Endothelial cell of umbilical vein (primary cell): ENCODE measurements at regions of chr17 and their contacts with region 1.

Region 1: GRCh38 chr17:64420143-64420971 is 28.6 kb upstream of the MILR1 start:
- DNase-seq: peak; percentile 76
- H3K4me3 ChIP-seq: no peak overlapping the region
- H3K27ac ChIP-seq: no peak overlapping the region
- H3K4me1 ChIP-seq: peaks cover 6% of the 10 kb centered on the region
- H3K27me3 ChIP-seq: no peaks in the 10 kb centered on the region
- CTCF ChIP-seq: peak; percentile 74 to 75
- POLR2A ChIP-seq: no peak

Region 2: GRCh38 chr17:64145757-64146417 is 274.5 kb before region 1 on chr17:
- CTCF ChIA-PET with region 1: interaction called, 3 read pairs
- POLR2A ChIA-PET with region 1: interaction called, 3 read pairs
- dilution Hi-C with region 1: no loop called
- intact Hi-C with region 1: loop called (anchors 5 kb)
- DNase-seq: peak; percentile 99
- H3K4me3 ChIP-seq: peak overlapping the region; percentile 31 to 72 (median 64)
- H3K27ac ChIP-seq: peak overlapping the region; percentile 63
- H3K4me1 ChIP-seq: peaks cover 21% of the 10 kb centered on the region
- H3K27me3 ChIP-seq: no peaks in the 10 kb centered on the region
- CTCF ChIP-seq: no peak
- POLR2A ChIP-seq: peak; percentile 100

Region 3: GRCh38 chr17:64291254-64291851 is 129.0 kb before region 1 on chr17:
- CTCF ChIA-PET with region 1: no interaction called
- POLR2A ChIA-PET with region 1: no interaction called
- dilution Hi-C with region 1: no loop called
- intact Hi-C with region 1: no loop called
- DNase-seq: no peak
- H3K4me3 ChIP-seq: no peak overlapping the region
- H3K27ac ChIP-seq: no peak overlapping the region
- H3K4me1 ChIP-seq: no peaks in the 10 kb centered on the region
- H3K27me3 ChIP-seq: no peaks in the 10 kb centered on the region
- CTCF ChIP-seq: peak in 1 of 2 donors; percentile 48
- POLR2A ChIP-seq: no peak

Region 4: GRCh38 chr17:64320613-64321553 is 99.5 kb before region 1 on chr17:
- CTCF ChIA-PET with region 1: interaction called, 70 read pairs
- POLR2A ChIA-PET with region 1: no interaction called
- dilution Hi-C with region 1: no loop called
- intact Hi-C with region 1: loop called (anchors 1 kb)
- DNase-seq: peak; percentile 85
- H3K4me3 ChIP-seq: no peak overlapping the region
- H3K27ac ChIP-seq: no peak overlapping the region
- H3K4me1 ChIP-seq: peaks cover 33% of the 10 kb centered on the region
- H3K27me3 ChIP-seq: no peaks in the 10 kb centered on the region
- CTCF ChIP-seq: peak; percentile 70 to 80
- POLR2A ChIP-seq: no peak

Region 5: GRCh38 chr17:64369007-64369893 is 51.1 kb before region 1 on chr17:
- CTCF ChIA-PET with region 1: interaction called, 10 read pairs
- POLR2A ChIA-PET with region 1: interaction called, 3 read pairs
- dilution Hi-C with region 1: no loop called
- intact Hi-C with region 1: no loop called
- DNase-seq: no peak
- H3K4me3 ChIP-seq: no peak overlapping the region
- H3K27ac ChIP-seq: no peak overlapping the region
- H3K4me1 ChIP-seq: no peaks in the 10 kb centered on the region
- H3K27me3 ChIP-seq: no peaks in the 10 kb centered on the region
- CTCF ChIP-seq: no peak
- POLR2A ChIP-seq: peak; percentile 28

Region 6: GRCh38 chr17:64406321-64407200 is 13.8 kb before region 1 on chr17:
- CTCF ChIA-PET with region 1: interaction called, 14 read pairs
- POLR2A ChIA-PET with region 1: no interaction called
- dilution Hi-C with region 1: no loop called
- intact Hi-C with region 1: no loop called
- DNase-seq: peak; percentile 69
- H3K4me3 ChIP-seq: no peak overlapping the region
- H3K27ac ChIP-seq: peak overlapping the region; percentile 22
- H3K4me1 ChIP-seq: peaks cover 49% of the 10 kb centered on the region
- H3K27me3 ChIP-seq: no peaks in the 10 kb centered on the region
- CTCF ChIP-seq: no peak
- POLR2A ChIP-seq: no peak

Region 7: GRCh38 chr17:64496786-64497564 is 76.6 kb after region 1 on chr17 and contains the start of gene POLG2:
- CTCF ChIA-PET with region 1: interaction called, 345 read pairs
- POLR2A ChIA-PET with region 1: interaction called, 8 read pairs
- dilution Hi-C with region 1: no loop called
- intact Hi-C with region 1: no loop called
- DNase-seq: peak; percentile 95
- H3K4me3 ChIP-seq: peak within 1 kb of the TSS; percentile 33 to 75 (median 66)
- H3K27ac ChIP-seq: peak within 1 kb of the TSS; percentile 73
- H3K4me1 ChIP-seq: peaks cover 54% of the 10 kb centered on the region
- H3K27me3 ChIP-seq: no peaks in the 10 kb centered on the region
- CTCF ChIP-seq: peak; percentile 36 to 44
- POLR2A ChIP-seq: peak; percentile 97
- total RNA-seq, gene POLG2: 18.6 and 20.3 TPM in 2 replicates